GM13976 (cell line): ENCODE measurements at regions of chr4 and their contacts with region 1.

Region 1: GRCh38 chr4:162506253-162506652 is 342.5 kb upstream of the FSTL5 start:
- DNase-seq: no peak
- CTCF ChIP-seq: no peak

Region 2: DNA sequence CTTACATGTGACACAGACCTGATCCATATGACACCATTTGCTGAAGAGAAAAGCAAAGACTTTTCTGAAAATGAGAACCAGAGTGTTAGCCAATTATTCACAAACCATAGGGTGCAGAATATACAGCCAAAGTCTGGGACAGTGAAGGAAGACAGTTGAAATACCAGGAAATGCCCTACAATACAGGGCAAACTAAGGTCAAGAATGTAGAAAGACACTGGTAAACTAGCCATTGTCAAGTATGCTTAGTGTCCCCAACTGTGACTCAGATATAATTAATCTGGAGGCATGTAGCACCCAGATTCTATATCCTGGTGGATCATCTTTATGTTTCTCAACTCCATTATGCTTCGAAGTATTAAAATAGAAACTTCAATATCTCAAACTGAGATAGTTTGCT is 141.6 kb before region 1 on chr4:
- in situ Hi-C with region 1: no loop called
- DNase-seq: no peak
- CTCF ChIP-seq: no peak

Region 3: DNA sequence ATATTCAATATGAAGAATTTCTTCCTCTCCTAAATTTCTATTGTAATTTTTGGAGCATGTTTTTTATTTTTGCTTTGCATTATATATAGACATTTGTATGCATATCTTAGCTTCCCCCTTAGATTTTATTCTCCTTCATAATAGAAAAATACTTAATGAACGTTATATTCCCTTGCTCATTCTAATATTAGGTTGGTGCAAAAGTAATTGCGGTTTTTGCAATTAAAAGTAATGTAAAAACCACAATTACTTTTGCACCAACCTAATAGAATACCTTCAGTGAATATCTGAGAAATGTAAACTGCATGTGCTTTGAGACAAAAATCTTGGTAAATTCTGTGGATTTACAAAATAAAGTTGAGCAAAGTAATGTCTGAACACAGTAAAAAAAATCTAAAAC is 236.2 kb after region 1 on chr4:
- in situ Hi-C with region 1: no loop called
- DNase-seq: no peak
- CTCF ChIP-seq: no peak

Region 4: DNA sequence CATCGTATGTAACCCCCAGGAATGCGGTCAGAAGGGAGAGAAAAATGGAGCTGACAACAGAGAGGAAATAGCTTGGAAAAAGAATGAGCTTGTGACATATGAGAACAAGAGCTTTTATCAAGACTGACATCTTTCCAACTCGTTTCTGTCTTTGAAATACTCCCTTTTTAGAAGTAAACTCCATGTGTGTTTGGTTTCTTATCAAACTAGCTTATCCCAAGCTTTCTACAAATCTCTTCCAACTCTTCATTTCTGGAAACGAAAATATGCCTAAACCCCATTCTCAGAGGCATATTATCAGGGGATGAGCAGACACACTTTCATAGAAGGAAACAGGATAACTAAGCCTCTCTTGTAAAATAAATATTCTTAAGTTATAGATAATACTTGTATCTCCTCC is 425.1 kb after region 1 on chr4:
- in situ Hi-C with region 1: no loop called
- DNase-seq: no peak
- CTCF ChIP-seq: no peak

Region 5: GRCh38 chr4:163048447-163048846 is 542.2 kb after region 1 on chr4:
- in situ Hi-C with region 1: loop called (anchors 10 kb)
- DNase-seq: peak; percentile 16
- CTCF ChIP-seq: peak; percentile 50

Region 6: DNA sequence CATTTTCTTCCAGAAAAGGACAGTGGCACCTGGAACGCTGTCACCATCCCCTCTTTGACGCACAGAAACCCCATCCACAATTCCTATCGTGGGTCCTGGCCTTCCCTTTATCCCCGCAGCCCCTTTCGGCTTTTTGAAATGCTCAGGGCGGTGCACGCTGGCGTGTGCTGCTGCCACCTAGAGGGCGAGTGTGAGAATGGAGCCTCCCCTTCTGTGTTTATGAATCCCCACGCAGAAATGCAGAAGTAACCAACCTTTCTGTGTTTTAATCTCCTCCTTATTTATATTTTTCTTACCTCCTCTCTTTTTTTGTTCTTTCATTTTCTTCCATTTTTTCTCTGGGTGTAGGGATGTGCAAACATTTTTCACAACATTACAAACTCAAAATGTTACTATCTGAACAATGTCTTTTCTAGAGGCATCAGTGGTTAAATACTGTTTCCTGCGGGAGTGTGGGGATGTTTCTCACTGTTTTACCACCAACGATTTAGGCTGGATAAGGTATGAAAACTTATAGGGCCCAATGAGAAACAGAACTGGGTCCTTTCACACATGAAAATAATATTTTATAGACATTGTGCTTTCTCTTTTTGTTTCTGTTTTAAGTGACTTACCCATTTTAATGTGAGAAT is 1038.3 kb after region 1 on chr4:
- in situ Hi-C with region 1: loop called (anchors 25 kb)
- DNase-seq: peak; percentile 69
- CTCF ChIP-seq: peak; percentile 93